ENCODE measurements at regions of chr3 and their contacts with region 1.

Region 1: DNA sequence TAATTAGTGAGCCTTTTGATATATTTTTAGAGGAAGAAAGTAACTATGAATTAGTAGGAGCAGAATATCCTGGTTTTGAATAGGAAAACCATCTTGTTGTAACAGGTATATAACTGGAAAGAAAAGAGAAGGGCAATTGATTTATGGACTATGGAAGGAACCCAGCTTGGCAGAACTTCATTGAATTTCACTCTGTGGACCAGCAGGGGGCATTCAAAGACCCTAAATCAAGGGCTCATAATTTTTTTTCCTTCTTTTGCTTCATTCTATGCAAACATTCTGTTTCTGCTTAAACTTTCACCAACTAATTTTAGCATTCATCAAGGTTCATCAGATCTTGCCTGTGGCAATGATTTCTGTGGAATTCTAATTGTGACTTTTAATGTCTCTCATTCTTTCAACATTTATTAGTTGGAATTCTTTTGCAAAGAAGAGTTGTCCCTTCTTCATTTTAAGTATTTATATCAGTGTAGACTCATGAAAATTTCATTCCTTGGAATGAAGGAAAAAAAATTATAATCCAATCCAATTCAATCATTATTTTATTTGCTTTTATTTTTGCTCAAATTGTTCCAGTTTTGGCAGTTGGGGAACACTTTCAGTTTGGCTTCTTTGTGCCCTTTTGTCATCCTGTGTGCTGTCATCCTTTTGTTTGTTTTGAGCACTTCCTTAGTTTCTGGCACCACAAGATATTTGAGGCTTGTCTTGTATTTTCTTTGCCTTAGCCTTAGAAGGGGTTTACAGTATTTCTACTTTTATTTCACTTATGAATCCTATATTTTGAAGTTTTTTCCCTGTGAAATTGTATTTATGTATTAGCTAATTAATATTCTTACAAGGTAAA is 30.4 kb downstream of the NXPE3 start:
- DNase-seq: no peak
- H3K4me3 ChIP-seq: no peak overlapping the region
- CTCF ChIP-seq: peak; percentile 48

Region 2: DNA sequence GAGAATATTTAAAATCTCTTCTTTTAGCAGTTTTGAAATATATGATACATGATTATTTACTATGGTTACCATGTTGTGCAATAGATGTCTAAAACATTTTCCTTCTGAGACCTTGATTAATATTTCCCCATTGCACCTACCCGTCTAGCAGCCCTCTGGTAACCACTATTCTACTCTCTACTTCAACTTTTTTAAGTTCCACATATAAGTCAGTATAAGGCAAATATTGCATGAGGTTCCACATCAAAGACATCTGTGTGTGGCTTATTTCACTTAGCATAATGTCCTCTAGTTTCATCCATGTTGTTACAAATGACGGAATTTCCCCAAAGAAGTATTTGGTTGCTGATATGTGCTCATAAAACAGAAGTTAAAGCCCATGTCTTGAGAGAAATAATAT is 10.4 kb after region 1 on chr3:
- CTCF ChIA-PET with region 1: interaction called, 66 read pairs
- POLR2A ChIA-PET with region 1: no interaction called
- DNase-seq: no peak
- H3K4me3 ChIP-seq: no peak overlapping the region
- CTCF ChIP-seq: no peak

Region 3: GRCh38 chr3:101827211-101828174 is 18.1 kb after region 1 on chr3:
- CTCF ChIA-PET with region 1: interaction called, 20 read pairs
- POLR2A ChIA-PET with region 1: no interaction called
- DNase-seq: no peak
- H3K4me3 ChIP-seq: peak overlapping the region; percentile 61
- CTCF ChIP-seq: no peak

Region 4: GRCh38 chr3:102536456-102536855 is 727.1 kb after region 1 on chr3:
- CTCF ChIA-PET with region 1: interaction called, 19 read pairs
- POLR2A ChIA-PET with region 1: no interaction called
- DNase-seq: no peak
- H3K4me3 ChIP-seq: no peak overlapping the region
- CTCF ChIP-seq: peak; percentile 19